ENCODE measurements at regions of chr2 and their contacts with region 1.

Region 1: DNA sequence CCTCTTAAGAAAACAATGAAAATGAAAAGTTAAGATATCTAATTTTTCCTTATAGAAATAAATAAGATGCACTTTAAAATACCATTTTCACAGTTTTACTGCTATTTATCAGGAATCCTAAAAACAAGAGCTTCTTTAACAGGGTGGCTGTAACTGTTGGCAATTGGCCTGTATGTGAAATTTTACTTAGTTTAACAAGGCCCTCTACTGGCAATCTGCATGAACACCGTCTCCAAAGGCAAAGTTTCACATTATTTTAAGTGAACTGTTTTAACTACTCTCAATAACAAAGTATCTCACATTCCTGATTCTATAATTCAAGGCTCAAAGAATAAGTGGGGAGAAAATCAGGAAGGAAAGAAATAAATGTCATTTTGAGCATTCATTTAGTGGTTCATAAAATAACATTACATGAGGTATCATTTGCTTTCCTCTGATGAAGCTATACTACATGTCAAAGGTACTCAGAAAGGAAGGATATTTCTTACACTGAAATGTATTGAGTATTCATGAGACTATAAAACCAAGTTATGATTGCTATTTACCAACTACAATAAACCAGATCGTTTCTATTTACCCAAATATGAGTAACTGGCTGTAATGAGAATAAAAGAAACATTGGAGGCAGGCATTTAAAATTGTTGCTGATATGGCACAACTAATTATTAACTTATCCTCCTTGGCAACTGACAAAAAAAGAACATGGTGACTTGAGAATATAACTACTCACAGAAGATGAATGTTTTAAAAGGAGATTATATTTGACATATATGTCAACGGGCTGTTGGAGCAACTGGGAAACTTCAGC is 7.0 kb downstream of the NCKAP5 start:
- DNase-seq: peak; percentile 90
- ATAC-seq: peak; percentile 91
- H3K4me3 ChIP-seq: no peak overlapping the region
- H3K27ac ChIP-seq: no peak overlapping the region; the same call in 1 of the 2 replicates
- H3K4me1 ChIP-seq: peaks cover 15% of the 10 kb centered on the region
- H3K27me3 ChIP-seq: no peaks in the 10 kb centered on the region
- CTCF ChIP-seq: peak; percentile 81
- POLR2A ChIP-seq: no peak
- RAD21 ChIP-seq: peak; percentile 89

Region 2: GRCh38 chr2:132547074-132547687 is 1014.1 kb before region 1 on chr2:
- CTCF ChIA-PET with region 1: interaction called, 4 read pairs
- POLR2A ChIA-PET with region 1: no interaction called
- dilution Hi-C with region 1: no loop called
- in situ Hi-C with region 1: loop called (anchors 10 kb)
- intact Hi-C with region 1: loop called (anchors 1 kb)
- DNase-seq: peak; percentile 85
- ATAC-seq: peak; percentile 67
- H3K4me3 ChIP-seq: no peak overlapping the region
- H3K27ac ChIP-seq: no peak overlapping the region
- H3K4me1 ChIP-seq: peaks cover 3% of the 10 kb centered on the region
- H3K27me3 ChIP-seq: no peaks in the 10 kb centered on the region
- CTCF ChIP-seq: peak; percentile 78
- POLR2A ChIP-seq: no peak
- RAD21 ChIP-seq: peak; percentile 85

Region 3: DNA sequence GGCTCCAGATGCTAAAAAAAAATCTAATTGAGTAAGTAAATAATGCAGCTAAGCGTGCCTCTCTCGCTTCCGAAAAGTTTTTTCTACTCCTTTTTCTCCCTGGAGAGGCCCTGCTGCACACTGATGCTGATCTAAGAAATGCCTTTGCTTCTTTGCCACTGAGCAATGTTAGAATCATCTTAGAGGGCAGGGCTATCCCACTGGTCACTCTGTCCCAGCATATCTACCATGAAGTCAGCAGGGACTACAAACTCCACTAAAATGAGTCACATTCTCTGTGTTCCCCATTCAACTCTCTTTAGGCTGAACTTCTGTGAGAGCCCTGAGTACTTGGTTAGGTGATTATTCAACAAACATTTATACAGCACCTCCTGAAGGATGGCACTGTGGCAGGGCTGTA is 763.7 kb before region 1 on chr2:
- CTCF ChIA-PET with region 1: no interaction called
- POLR2A ChIA-PET with region 1: no interaction called
- dilution Hi-C with region 1: no loop called
- in situ Hi-C with region 1: no loop called
- intact Hi-C with region 1: loop called (anchors 10 kb)
- DNase-seq: peak; percentile 91
- ATAC-seq: peak; percentile 96
- H3K4me3 ChIP-seq: no peak overlapping the region
- H3K27ac ChIP-seq: no peak overlapping the region
- H3K4me1 ChIP-seq: peaks cover 3% of the 10 kb centered on the region; the same call in 1 of the 2 replicates
- H3K27me3 ChIP-seq: no peaks in the 10 kb centered on the region
- CTCF ChIP-seq: no peak
- POLR2A ChIP-seq: no peak
- RAD21 ChIP-seq: peak; percentile 25; the same call in 1 of the 2 replicates

Region 4: DNA sequence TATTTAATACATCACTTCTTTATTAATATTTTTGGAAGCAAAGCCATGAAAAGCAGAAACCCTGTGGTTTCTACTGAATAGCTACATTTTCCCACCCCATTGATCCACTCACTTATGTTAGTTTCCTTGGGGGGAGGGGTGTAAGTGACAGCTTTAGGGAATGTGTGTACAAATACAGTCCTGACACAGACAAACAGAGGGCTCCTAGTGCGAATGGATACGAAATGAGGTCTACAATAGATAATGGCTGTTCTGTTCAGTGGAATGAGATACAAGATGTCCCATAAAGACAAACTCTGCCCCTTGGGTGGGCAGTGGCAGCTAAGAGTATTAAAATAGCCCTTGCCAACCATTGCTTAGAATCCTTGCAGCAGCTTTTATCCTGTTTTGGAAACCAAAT is 305.9 kb before region 1 on chr2:
- CTCF ChIA-PET with region 1: no interaction called
- POLR2A ChIA-PET with region 1: no interaction called
- dilution Hi-C with region 1: no loop called
- in situ Hi-C with region 1: loop called (anchors 10 kb)
- intact Hi-C with region 1: no loop called
- DNase-seq: no peak
- ATAC-seq: peak; percentile 44
- H3K4me3 ChIP-seq: no peak overlapping the region
- H3K27ac ChIP-seq: peak overlapping the region; percentile 57; the same call in 1 of the 2 replicates
- H3K4me1 ChIP-seq: peaks cover 17% of the 10 kb centered on the region
- H3K27me3 ChIP-seq: no peaks in the 10 kb centered on the region
- CTCF ChIP-seq: no peak
- POLR2A ChIP-seq: no peak
- RAD21 ChIP-seq: no peak

Region 5: DNA sequence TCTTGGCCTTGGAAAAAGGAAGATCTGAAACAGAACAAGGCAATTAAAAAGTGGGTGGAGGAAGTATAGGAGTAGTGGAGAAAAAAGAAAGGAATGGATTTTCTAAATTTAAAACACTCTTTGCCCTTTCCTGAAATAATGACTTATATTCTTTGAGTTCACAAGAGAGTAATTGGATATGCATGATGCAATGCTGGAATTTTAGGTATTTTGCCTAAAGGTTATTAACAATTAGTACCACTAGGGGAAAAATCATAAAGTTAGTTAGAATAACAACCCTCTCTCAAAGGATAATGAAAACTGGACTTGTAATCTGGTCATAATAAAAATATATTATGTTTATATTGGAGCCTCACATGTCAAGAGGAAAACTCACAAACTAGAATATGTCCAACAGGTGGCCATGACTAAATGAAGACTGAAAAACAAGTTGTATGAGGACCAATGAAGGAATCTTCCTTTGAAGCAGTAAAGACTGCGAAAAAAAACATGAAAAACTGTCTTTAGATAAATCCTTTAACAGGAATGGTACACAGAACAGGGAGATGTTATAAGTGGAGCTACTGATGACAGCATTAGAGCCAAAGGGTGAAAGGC is 274.8 kb before region 1 on chr2:
- CTCF ChIA-PET with region 1: interaction called, 3 read pairs
- POLR2A ChIA-PET with region 1: interaction called, 5 read pairs
- dilution Hi-C with region 1: no loop called
- in situ Hi-C with region 1: no loop called
- intact Hi-C with region 1: loop called (anchors 2 kb)
- DNase-seq: peak; percentile 81
- ATAC-seq: peak; percentile 25
- H3K4me3 ChIP-seq: no peak overlapping the region
- H3K27ac ChIP-seq: peak overlapping the region; percentile 97
- H3K4me1 ChIP-seq: peaks cover 22% of the 10 kb centered on the region
- H3K27me3 ChIP-seq: no peaks in the 10 kb centered on the region
- CTCF ChIP-seq: peak; percentile 25; the same call in 1 of the 2 replicates
- POLR2A ChIP-seq: no peak
- RAD21 ChIP-seq: no peak

Region 6: DNA sequence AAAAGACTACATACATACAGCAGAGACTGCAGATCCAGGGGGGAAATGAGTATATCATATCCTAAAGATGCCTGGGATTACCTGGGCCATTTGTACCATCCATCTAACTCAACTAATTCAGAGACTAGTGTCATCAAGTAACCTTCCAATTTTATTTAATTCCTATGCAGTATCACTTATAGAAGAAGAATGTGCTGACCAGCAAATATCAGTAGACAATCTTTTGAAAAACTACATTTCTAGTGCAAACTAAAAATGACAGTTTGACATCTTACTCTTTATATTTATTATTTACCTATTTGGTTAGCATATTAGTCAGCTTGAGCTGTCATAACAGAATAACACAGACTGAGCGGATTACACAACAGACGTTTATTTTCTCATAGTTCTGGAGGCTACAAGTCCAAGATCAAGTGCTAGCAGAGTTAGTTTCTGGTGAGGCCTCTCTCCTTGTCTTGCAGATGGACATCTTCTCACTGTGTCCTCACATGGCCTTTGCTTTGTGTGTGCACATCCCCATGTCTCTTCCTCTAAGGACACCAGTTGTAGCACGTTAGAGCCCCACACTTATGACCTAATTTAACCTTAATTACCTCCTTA is 40.0 kb before region 1 on chr2:
- CTCF ChIA-PET with region 1: no interaction called
- POLR2A ChIA-PET with region 1: no interaction called
- dilution Hi-C with region 1: no loop called
- in situ Hi-C with region 1: no loop called
- intact Hi-C with region 1: no loop called
- DNase-seq: peak; percentile 18
- ATAC-seq: peak; percentile 38; the same call in 1 of the 2 replicates
- H3K4me3 ChIP-seq: no peak overlapping the region
- H3K27ac ChIP-seq: peak overlapping the region; percentile 9; the same call in 1 of the 2 replicates
- H3K4me1 ChIP-seq: peaks cover 15% of the 10 kb centered on the region
- H3K27me3 ChIP-seq: no peaks in the 10 kb centered on the region
- CTCF ChIP-seq: no peak
- POLR2A ChIP-seq: no peak
- RAD21 ChIP-seq: no peak